Activated CD4-positive, alpha-beta memory T cell treated with anti-CD3 and anti-CD28 coated beads for 36 hours (primary cell): ENCODE measurements at regions of chr16 and their contacts with region 1.

Region 1: GRCh38 chr16:57084257-57084770 is 8.1 kb upstream of the CPNE2 start:
- DNase-seq: peak; percentile 85
- H3K4me3 Mint-ChIP-seq: no peak overlapping the region
- H3K27ac Mint-ChIP-seq: no peak overlapping the region
- H3K4me1 Mint-ChIP-seq: peaks cover 6% of the 10 kb centered on the region
- H3K27me3 Mint-ChIP-seq: no peaks in the 10 kb centered on the region

Region 2: GRCh38 chr16:57029161-57030160 is 54.9 kb before region 1 on chr16:
- CTCF ChIA-PET with region 1: no interaction called
- POLR2A ChIA-PET with region 1: no interaction called
- intact Hi-C with region 1: no loop called
- DNase-seq: peak; percentile 38
- H3K4me3 Mint-ChIP-seq: no peak overlapping the region
- H3K27ac Mint-ChIP-seq: peak overlapping the region; percentile 66
- H3K4me1 Mint-ChIP-seq: peaks cover 75% of the 10 kb centered on the region
- H3K27me3 Mint-ChIP-seq: no peaks in the 10 kb centered on the region

Region 3: GRCh38 chr16:57098188-57098841 is 14.0 kb after region 1 on chr16:
- CTCF ChIA-PET with region 1: interaction called, 43 read pairs
- POLR2A ChIA-PET with region 1: no interaction called
- intact Hi-C with region 1: no loop called
- DNase-seq: no peak
- H3K4me3 Mint-ChIP-seq: no peak overlapping the region
- H3K27ac Mint-ChIP-seq: no peak overlapping the region
- H3K4me1 Mint-ChIP-seq: peaks cover 11% of the 10 kb centered on the region
- H3K27me3 Mint-ChIP-seq: peaks cover 4% of the 10 kb centered on the region

Region 4: GRCh38 chr16:57167953-57168352 is 83.6 kb after region 1 on chr16:
- CTCF ChIA-PET with region 1: interaction called, 17 read pairs
- POLR2A ChIA-PET with region 1: no interaction called
- intact Hi-C with region 1: loop called (anchors 1 kb)
- DNase-seq: no peak
- H3K4me3 Mint-ChIP-seq: no peak overlapping the region
- H3K27ac Mint-ChIP-seq: no peak overlapping the region
- H3K4me1 Mint-ChIP-seq: peaks cover 3% of the 10 kb centered on the region
- H3K27me3 Mint-ChIP-seq: no peaks in the 10 kb centered on the region

Region 5: DNA sequence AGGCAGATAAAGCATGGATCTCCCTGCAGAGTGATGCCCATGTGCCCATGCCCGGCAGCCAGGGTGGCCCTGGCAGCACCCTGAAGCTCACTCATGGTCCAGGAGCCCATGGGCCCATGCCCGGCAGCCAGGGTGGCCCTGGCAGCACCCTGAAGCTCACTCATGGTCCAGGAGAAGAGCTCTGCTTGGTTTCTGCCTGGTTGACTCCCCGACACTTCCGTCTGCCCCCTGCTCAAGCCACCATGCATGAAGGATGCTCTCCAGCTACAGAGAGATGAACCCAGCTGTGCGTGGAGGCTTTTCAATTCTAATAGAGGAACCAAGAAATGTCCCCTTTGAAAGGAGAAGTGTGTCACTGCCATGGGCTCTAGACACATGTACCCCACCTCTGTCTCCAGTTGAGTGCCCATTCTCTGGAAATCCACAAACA is 329.0 kb after region 1 on chr16:
- CTCF ChIA-PET with region 1: interaction called, 7 read pairs
- POLR2A ChIA-PET with region 1: no interaction called
- intact Hi-C with region 1: loop called (anchors 5 kb)
- DNase-seq: no peak
- H3K4me3 Mint-ChIP-seq: no peak overlapping the region
- H3K27ac Mint-ChIP-seq: no peak overlapping the region
- H3K4me1 Mint-ChIP-seq: peaks cover 10% of the 10 kb centered on the region
- H3K27me3 Mint-ChIP-seq: no peaks in the 10 kb centered on the region